ENCODE measurements at regions of chr9 and their contacts with region 1.

Region 1: GRCh38 chr9:36873247-36873875 is 160.7 kb downstream of the PAX5 start:
- DNase-seq: peak; percentile 71 to 74
- H3K4me3 ChIP-seq: no peak overlapping the region
- H3K4me3 Mint-ChIP-seq: no peak overlapping the region
- H3K27ac Mint-ChIP-seq: no peak overlapping the region
- H3K4me1 ChIP-seq: peaks cover 6% of the 10 kb centered on the region
- H3K4me1 Mint-ChIP-seq: peaks cover 9% of the 10 kb centered on the region
- H3K27me3 ChIP-seq: no peaks in the 10 kb centered on the region
- H3K27me3 Mint-ChIP-seq: peaks cover 4% of the 10 kb centered on the region
- CTCF ChIP-seq: peak; percentile 91 to 94

Region 2: GRCh38 chr9:36597412-36598178 is 275.8 kb before region 1 on chr9:
- CTCF ChIA-PET with region 1: no interaction called
- POLR2A ChIA-PET with region 1: no interaction called
- intact Hi-C with region 1: no loop called
- DNase-seq: peak; percentile 48 to 52
- H3K4me3 ChIP-seq: no peak overlapping the region
- H3K4me3 Mint-ChIP-seq: no peak overlapping the region
- H3K27ac Mint-ChIP-seq: no peak overlapping the region
- H3K4me1 ChIP-seq: no peaks in the 10 kb centered on the region
- H3K4me1 Mint-ChIP-seq: no peaks in the 10 kb centered on the region
- H3K27me3 ChIP-seq: no peaks in the 10 kb centered on the region
- H3K27me3 Mint-ChIP-seq: no peaks in the 10 kb centered on the region
- CTCF ChIP-seq: peak; percentile 68 to 74

Region 3: DNA sequence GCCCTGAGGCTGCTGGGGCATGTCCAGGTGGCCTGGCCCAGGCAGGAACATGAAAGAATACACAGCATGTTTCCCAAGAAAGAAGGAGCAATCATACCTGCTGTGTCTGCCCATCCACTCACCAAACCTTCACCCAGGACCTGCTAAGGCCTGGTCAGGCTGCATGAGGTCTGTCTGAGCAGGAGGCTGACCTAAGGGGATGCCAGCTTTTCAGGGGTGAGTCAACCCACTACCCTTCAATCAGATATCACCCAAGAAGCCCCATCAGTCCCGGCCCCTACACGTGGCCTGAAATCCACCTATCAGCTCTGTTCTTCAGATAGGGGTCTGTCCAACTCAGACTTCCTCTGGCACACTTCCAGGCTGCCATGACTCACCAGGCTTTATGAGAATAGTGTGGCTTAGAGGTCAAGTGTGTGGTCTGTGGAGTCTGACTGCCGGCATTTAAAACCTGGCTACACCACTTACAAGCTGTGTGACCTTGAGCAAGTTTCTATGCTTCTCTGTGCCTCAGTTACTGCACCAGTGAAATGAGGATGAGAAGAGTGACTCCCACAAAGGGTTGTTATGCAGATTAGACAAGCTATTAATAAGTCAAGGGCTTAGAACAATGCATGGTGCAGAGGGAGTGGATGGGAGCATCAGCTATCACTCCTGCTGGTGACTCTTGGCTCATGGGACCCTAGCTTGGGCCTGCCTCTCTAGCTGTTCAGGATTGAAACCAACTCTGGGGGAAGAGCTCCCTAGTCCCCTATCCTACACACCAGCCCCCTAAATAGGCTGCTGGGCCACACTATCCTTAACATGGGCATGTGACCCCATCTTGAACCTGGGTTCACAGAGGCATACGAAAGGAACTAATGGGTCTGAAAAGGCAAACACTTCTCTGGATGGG is 30.4 kb after region 1 on chr9:
- CTCF ChIA-PET with region 1: interaction called, 19 read pairs
- POLR2A ChIA-PET with region 1: no interaction called
- intact Hi-C with region 1: loop called (anchors 5 kb)
- DNase-seq: no peak
- H3K4me3 ChIP-seq: no peak overlapping the region
- H3K4me3 Mint-ChIP-seq: no peak overlapping the region
- H3K27ac Mint-ChIP-seq: no peak overlapping the region
- H3K4me1 ChIP-seq: no peaks in the 10 kb centered on the region
- H3K4me1 Mint-ChIP-seq: peaks cover 11% of the 10 kb centered on the region
- H3K27me3 ChIP-seq: no peaks in the 10 kb centered on the region; the same call in 1 of the 2 replicates
- H3K27me3 Mint-ChIP-seq: peaks cover 25% of the 10 kb centered on the region
- CTCF ChIP-seq: no peak

Region 4: GRCh38 chr9:36974731-36975130 is 101.4 kb after region 1 on chr9:
- CTCF ChIA-PET with region 1: interaction called, 10 read pairs
- POLR2A ChIA-PET with region 1: no interaction called
- intact Hi-C with region 1: no loop called
- DNase-seq: no peak
- H3K4me3 ChIP-seq: no peak overlapping the region
- H3K4me3 Mint-ChIP-seq: no peak overlapping the region
- H3K27ac Mint-ChIP-seq: no peak overlapping the region
- H3K4me1 ChIP-seq: no peaks in the 10 kb centered on the region
- H3K4me1 Mint-ChIP-seq: no peaks in the 10 kb centered on the region
- H3K27me3 ChIP-seq: no peaks in the 10 kb centered on the region
- H3K27me3 Mint-ChIP-seq: peaks cover 9% of the 10 kb centered on the region
- CTCF ChIP-seq: peak in 1 of 2 experiments; percentile 47

Measured in Caco-2 (cell line).